Posterior vena cava (tissue), 2 donors: ENCODE measurements at regions of chr2 and their contacts with region 1.

Region 1: DNA sequence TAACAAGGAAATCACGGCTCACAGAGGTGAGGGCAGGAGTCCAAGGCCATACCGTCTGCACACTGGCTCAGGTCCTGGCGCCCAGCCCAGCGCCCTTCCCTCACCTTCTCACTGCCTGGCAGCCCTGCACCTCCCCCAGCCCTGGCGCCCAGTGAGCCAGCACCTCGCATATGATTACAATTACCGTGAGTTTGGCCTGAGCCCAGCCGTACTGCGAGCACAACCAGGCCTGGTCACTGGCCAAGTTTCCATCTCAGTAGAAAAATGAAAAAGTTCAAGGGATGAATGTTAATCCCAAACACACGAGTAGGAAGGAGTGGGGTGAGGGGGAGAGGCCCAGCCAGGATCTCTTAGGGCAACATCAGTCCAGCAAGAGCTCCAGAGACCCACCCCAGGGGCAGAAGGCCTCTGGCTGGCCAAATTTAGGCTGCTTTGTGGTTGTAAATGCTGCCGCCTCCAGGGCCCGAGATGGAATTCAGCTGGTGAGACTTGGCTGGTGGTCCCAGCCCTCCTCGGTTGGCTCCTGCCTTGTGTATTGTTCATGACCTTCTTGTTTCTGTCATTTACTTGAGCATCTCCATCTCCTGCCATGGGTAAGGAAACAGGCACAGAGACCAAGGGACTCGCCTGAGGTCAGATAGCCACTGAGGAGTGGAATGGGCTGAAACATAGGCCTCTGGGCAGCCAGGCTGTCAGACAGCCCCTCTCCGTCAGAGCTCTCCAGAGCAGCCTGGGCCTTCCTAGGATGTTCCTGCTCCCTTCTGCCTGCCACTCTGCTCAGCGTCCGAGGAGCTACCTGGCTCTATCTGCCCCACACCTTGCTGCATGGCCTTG is 68.2 kb downstream of the MCFD2 start:
- DNase-seq: peak; percentile 92

Region 2: DNA sequence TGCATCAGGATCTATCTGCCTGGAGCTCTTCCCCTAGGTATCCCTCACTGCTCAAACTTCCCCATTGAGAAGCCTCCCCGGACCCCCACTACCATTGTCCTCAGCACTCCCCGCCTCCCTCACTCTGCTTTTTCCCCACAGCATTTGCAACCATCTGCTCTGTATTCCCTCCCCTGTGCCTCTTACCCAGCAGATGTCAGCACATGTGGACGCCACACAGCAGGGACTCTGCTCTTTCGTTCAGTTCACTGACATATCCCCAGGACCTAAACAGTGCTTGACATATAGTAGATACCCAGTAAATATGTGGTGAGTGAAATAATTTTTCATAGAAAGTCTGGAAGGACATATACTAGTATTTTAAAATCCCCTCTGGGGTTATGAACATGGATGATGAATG is 267.0 kb before region 1 on chr2:
- intact Hi-C with region 1: loop called in 1 of 2 experiments (anchors 5 kb)
- DNase-seq: no peak